ENCODE measurements at regions of chr1 and their contacts with region 1.

Region 1: DNA sequence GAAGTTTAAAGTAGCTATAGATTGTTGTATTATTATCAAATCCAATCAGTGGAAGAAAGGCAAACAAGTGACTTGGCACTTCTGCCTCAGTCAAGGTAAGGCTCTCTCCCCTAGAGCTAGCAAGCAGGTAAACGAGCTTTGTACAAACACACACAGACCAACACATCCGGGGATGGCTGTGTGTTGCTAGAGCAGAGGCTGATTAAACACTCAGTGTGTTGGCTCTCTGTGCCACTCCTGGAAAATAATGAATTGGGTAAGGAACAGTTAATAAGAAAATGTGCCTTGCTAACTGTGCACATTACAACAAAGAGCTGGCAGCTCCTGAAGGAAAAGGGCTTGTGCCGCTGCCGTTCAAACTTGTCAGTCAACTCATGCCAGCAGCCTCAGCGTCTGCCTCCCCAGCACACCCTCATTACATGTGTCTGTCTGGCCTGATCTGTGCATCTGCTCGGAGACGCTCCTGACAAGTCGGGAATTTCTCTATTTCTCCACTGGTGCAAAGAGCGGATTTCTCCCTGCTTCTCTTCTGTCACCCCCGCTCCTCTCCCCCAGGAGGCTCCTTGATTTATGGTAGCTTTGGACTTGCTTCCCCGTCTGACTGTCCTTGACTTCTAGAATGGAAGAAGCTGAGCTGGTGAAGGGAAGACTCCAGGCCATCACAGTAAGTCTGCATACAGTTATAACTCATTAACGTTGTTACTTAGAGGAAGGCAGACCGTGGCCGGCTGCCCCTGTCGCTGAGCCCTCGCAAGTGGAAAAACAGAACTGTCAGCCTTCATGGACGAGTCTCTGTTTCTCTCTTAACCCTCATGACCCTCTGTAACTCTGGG is at the start of gene PALMD:
- DNase-seq: peak; percentile 79
- ATAC-seq: peak; percentile 68
- total RNA-seq, gene PALMD: 122 TPM

Region 2: GRCh38 chr1:99180343-99180808 is 465.5 kb before region 1 on chr1:
- intact Hi-C with region 1: loop called (anchors 1 kb)
- DNase-seq: no peak
- ATAC-seq: peak; percentile 89

Region 3: DNA sequence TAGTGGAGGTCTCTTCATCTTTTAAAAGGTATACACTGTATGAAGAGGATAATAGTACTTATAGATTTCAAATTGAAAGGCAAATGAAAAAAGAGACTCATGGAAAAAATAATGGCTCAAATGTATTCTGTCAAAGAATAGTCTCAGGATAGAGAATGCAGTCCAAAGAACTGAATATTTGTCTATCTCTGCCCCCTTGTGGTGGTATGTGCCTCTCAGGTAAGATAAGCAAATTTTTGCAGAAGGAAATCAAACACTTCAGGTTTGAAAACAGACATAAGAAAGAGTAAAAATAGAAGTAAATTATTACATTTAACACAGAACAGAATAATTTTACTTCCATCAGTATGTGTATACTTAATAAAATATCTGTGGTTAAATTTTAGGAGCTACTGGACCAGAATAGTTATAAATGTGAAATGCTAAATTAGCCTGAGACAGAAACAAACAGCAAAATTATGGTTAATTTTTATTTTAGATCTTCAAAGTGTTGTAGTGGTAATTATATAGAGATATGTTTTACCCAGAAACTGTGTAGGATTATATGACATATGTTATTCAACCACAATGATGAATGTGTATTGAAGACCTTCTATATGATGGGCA is 164.4 kb before region 1 on chr1:
- intact Hi-C with region 1: loop called (anchors 5 kb)
- DNase-seq: no peak
- ATAC-seq: peak; percentile 48

Region 4: DNA sequence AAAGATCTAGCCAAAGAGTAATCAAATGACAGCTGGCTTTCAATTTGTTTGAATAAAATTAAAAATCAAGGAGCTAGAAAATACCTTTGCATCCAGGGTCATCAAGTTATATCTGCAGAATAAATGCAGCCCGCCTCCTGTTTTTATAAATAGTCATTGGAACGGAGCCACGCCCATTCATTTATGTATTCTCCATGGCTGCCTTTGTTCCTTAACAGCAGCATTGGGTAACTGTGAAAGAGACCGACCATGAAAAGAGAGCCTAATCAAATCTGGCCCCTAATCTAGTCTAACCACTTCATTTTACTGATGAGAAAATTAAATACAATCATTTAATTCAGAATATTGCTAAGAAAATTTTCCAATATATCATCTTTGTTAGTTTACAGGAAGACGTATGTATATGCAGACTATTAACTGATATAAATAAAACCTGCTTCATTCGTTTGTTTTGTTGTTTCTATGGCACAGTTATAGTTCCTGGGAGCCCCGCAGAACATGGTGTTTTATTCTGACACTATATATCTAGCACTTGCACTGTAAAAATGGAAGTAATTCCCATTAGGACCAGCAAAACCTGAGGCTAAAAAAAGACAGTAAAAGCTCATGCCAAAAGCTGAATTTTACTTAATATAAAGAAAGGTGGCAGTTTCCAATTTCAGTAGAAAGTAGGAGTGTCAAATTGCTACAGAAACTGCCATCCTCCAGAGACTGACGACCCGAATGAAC is 111.8 kb before region 1 on chr1:
- intact Hi-C with region 1: loop called (anchors 2 kb)
- DNase-seq: no peak
- ATAC-seq: peak; percentile 62

Region 5: DNA sequence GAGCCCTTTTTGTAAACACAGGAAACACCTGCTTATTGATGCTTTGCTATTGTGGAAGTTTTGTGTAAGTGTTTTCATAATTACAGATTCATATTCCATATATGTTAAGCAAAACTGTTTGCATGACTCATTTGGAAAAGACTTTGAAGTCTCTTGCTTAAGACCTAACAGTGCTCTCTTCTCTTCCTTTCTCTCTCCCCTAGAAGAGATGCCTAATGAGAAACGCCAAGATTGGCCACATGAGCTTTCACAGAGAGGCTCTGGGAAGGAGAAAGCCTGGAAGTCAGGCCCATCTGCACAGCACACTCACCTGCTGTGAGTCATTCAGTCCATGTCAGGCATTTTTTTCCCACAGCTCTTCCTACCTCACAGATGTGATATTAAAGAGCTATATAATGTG is 101.6 kb before region 1 on chr1:
- intact Hi-C with region 1: loop called (anchors 2 kb)
- DNase-seq: no peak
- ATAC-seq: no peak

Region 6: GRCh38 chr1:99603699-99604560 is 42.0 kb before region 1 on chr1:
- intact Hi-C with region 1: no loop called
- DNase-seq: no peak
- ATAC-seq: no peak

Region 7: GRCh38 chr1:99662581-99663208 is 16.8 kb after region 1 on chr1:
- intact Hi-C with region 1: loop called (anchors 2 kb)
- DNase-seq: peak; percentile 75
- ATAC-seq: peak; percentile 91

Region 8: DNA sequence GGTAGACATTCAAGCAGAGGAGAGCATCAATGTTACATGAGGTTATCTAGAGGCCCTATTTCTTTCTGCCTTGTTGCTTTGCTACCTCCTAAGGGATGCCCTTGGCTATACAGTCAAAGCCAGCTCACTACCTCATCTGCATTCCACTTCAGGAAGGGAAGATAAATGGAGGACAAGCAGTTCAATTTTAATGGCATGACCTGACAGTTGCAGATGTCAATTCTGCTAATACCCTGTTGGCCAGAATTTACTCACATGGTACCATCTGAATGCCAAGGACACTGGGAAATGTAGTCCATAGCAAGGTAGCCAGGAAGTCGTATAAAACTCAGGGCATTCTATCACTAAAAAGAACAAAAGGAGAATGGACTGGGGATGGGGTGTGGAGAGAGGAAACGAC is 31.5 kb after region 1 on chr1:
- intact Hi-C with region 1: loop called (anchors 2 kb)
- DNase-seq: no peak
- ATAC-seq: peak; percentile 66

Measured in Right ventricle myocardium inferior (tissue), 1 donor.